ENCODE measurements at regions of chr17 and their contacts with region 1.

Region 1: DNA sequence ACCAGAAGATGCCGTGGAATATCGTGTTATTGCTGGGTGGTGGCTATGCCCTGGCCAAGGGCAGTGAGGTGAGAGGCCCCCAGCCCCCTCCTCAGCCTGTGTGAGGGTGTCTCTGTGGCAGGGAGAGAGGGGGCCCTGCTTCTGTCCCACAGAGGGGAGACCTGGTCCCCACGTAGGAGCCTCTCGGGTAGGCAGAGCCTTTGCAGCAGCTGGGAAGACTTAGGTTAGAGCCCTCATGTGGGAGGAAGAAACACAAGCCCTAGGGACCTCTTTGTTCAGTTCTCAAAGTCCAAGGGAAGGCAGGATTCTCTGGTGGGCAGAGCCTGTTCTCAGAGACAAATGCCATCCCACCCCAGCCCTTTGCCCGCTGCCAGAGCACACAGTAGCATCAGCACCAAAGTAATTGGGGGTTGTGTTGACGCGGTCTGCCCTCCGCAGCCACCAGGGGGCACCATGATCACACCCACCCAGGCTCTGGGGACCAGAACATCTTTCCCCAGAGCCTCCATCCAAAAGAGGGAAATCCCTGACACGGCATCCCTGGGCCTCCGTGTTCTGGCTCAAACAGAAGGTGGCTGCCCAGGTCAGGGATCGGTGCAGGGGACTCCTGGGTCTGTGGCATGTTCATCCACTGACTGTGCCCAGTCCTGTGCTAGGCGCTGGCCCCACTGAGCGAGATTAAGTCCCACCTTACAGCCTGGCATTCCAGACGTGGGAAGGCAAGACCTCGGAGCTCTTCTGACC is 11.5 kb upstream of the FOXN1 start:
- DNase-seq: peak; percentile 68
- H3K4me3 Mint-ChIP-seq: no peak overlapping the region
- H3K27ac Mint-ChIP-seq: no peak overlapping the region
- H3K4me1 Mint-ChIP-seq: peaks cover 4% of the 10 kb centered on the region
- H3K27me3 Mint-ChIP-seq: no peaks in the 10 kb centered on the region

Region 2: GRCh38 chr17:28509789-28510188 is 15.2 kb after region 1 on chr17:
- intact Hi-C with region 1: no loop called
- DNase-seq: no peak
- H3K4me3 Mint-ChIP-seq: no peak overlapping the region
- H3K27ac Mint-ChIP-seq: no peak overlapping the region
- H3K4me1 Mint-ChIP-seq: no peaks in the 10 kb centered on the region
- H3K27me3 Mint-ChIP-seq: peaks cover 4% of the 10 kb centered on the region

Region 3: GRCh38 chr17:28540231-28540630 is 45.6 kb after region 1 on chr17:
- intact Hi-C with region 1: loop called (anchors 1 kb)
- DNase-seq: no peak
- H3K4me3 Mint-ChIP-seq: no peak overlapping the region
- H3K27ac Mint-ChIP-seq: no peak overlapping the region
- H3K4me1 Mint-ChIP-seq: no peaks in the 10 kb centered on the region
- H3K27me3 Mint-ChIP-seq: no peaks in the 10 kb centered on the region

Region 4: GRCh38 chr17:28576758-28577465 is 82.3 kb after region 1 on chr17 and contains the start of gene ALDOC:
- intact Hi-C with region 1: loop called (anchors 1 kb)
- DNase-seq: peak; percentile 98
- H3K4me3 Mint-ChIP-seq: peak within 1 kb of the TSS; percentile 86
- H3K27ac Mint-ChIP-seq: peak within 1 kb of the TSS; percentile 94
- H3K4me1 Mint-ChIP-seq: peaks cover 79% of the 10 kb centered on the region
- H3K27me3 Mint-ChIP-seq: no peaks in the 10 kb centered on the region
- total RNA-seq, gene ALDOC: 44.0 and 47.6 TPM in 2 replicates

Region 5: GRCh38 chr17:28612936-28613872 is 118.6 kb after region 1 on chr17:
- intact Hi-C with region 1: loop called (anchors 1 kb)
- DNase-seq: peak; percentile 4
- H3K4me3 Mint-ChIP-seq: no peak overlapping the region
- H3K27ac Mint-ChIP-seq: no peak overlapping the region
- H3K4me1 Mint-ChIP-seq: no peaks in the 10 kb centered on the region
- H3K27me3 Mint-ChIP-seq: no peaks in the 10 kb centered on the region

Region 6: DNA sequence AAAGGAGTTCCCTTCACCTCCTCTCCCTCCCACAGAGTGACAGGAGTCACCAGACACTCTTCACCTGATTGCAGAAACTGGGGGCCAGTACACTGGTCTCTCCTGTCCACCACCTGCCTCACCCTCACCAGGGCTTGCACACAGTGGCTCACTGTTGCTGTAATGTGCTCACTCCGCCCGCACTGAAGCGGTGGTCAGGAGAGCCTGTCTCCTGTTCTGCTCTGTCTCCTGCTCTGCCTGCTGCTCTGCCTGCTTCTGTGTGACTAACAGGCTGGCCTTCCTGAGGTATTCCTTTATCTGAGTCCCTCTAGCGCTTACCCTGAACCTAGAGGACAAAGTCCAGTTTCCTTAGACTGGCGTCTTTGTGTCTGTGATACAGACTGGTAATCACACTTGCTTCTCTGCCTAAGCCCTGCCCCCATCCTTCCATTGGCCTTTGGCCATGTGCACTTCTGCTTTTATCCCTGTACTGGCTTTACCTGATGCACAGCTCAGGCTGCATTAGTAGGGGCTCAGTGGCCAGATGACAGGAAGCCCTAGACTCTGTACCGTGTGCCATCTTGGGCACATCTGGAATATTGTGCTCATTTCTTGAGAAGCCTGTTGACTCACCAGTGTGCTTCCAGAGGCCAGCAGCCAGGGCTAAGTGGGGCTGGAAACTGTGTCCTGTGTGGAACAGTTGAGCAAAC is 203.8 kb after region 1 on chr17:
- intact Hi-C with region 1: no loop called
- DNase-seq: no peak
- H3K4me3 Mint-ChIP-seq: no peak overlapping the region
- H3K27ac Mint-ChIP-seq: no peak overlapping the region
- H3K4me1 Mint-ChIP-seq: no peaks in the 10 kb centered on the region
- H3K27me3 Mint-ChIP-seq: no peaks in the 10 kb centered on the region

Region 7: DNA sequence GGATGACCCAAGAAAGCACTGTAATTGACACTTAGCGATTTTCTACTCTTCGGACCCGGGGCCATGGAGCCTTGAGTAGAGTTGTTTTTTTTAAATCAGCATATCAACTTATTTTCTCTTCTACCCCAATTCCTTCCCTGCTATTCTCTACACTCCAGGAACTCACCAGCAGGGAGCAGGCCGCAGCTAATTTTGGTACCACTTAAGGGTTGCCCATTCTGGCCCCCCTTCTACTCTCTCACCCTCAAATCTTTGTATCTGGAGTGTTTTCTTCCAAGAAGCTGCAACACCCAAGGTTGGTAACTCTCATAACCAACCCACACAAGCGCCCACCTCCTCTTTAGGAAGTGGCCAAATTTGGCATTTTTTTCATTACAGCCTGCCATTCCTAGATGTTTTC is 354.7 kb after region 1 on chr17:
- intact Hi-C with region 1: no loop called
- DNase-seq: no peak
- H3K4me3 Mint-ChIP-seq: no peak overlapping the region
- H3K27ac Mint-ChIP-seq: no peak overlapping the region
- H3K4me1 Mint-ChIP-seq: peaks cover 4% of the 10 kb centered on the region
- H3K27me3 Mint-ChIP-seq: no peaks in the 10 kb centered on the region